Naive thymus-derived CD4-positive, alpha-beta T cell (primary cell): ENCODE measurements at regions of chr15 and their contacts with region 1.

Region 1: GRCh38 chr15:41774062-41774881 is at the start of gene MAPKBP1:
- DNase-seq: peak; percentile 96 to 99 (median 98)
- ATAC-seq: peak; percentile 97
- H3K4me3 ChIP-seq: peak within 1 kb of the TSS; percentile 93
- H3K4me3 Mint-ChIP-seq: peak within 1 kb of the TSS; percentile 86 to 97 (median 95)
- H3K27ac ChIP-seq: peak within 1 kb of the TSS; percentile 73
- H3K27ac Mint-ChIP-seq: peak within 1 kb of the TSS; percentile 88 to 97 (median 94)
- H3K4me1 ChIP-seq: peaks cover 36% of the 10 kb centered on the region in 2 donors
- H3K4me1 Mint-ChIP-seq: peaks cover 33 to 65% (median 59%) of the 10 kb centered on the region in 7 donors
- H3K27me3 ChIP-seq: no peaks in the 10 kb centered on the region
- H3K27me3 Mint-ChIP-seq: no peaks in the 10 kb centered on the region
- total RNA-seq, gene MAPKBP1: 36.5 to 44.7 (median 41.1) TPM

Region 2: GRCh38 chr15:40952901-40953712 is 821.2 kb before region 1 on chr15 and contains the start of gene CHAC1:
- CTCF ChIA-PET with region 1: no interaction called
- POLR2A ChIA-PET with region 1: no interaction called
- intact Hi-C with region 1: loop called in 1 of 2 experiments (anchors 1 kb)
- DNase-seq: peak; percentile 79 to 97 (median 94)
- ATAC-seq: peak; percentile 98
- H3K4me3 ChIP-seq: peak within 1 kb of the TSS; percentile 68
- H3K4me3 Mint-ChIP-seq: peak within 1 kb of the TSS; percentile 87 to 96 (median 94)
- H3K27ac ChIP-seq: peak within 1 kb of the TSS; percentile 74
- H3K27ac Mint-ChIP-seq: peak within 1 kb of the TSS in 8 of 9 donors; percentile 76 to 95 (median 88)
- H3K4me1 ChIP-seq: peaks cover 10 to 14% of the 10 kb centered on the region in 2 donors
- H3K4me1 Mint-ChIP-seq: peaks cover 7 to 34% (median 19%) of the 10 kb centered on the region in 7 donors
- H3K27me3 ChIP-seq: no peaks in the 10 kb centered on the region
- H3K27me3 Mint-ChIP-seq: peaks cover 0 to 4% (median 0%) of the 10 kb centered on the region in 5 donors
- total RNA-seq, gene CHAC1: 0.24 to 5.7 (median 1.1) TPM

Region 3: DNA sequence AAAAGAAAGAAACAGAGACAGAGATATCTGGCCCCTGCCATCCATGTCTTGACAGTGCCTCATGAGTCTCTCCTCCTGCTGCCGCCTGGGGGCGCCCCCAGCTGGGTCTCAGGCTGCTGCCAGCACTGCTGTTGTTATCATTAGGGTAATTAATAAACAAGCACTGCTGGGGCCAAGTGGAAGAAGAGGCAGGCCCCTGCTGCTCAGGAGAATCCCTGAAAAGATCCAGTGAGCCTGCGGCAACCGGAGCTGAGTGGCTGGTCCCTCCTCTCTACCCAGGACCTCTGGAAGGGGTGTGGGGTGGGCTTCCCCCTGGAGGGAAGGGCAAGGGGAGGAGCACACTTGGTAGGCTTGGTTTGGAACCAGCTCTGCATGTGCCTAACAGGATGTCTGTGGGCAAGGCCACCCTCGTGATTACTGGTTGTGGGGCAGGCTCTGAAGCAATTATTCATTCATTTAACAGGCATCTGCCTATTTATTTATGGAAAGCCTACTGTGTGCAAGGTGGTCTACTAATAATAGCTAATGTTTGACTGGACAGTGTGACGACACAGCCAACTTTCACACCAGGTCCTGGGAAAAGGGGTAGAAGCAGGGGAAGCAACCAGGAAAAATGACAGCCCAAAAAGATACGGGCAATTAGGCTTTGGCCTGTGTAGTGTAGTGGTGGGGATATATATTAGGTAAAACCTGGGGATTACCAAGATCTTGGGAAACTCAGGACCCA is 216.4 kb before region 1 on chr15:
- CTCF ChIA-PET with region 1: interaction called, 6 read pairs
- POLR2A ChIA-PET with region 1: no interaction called
- intact Hi-C with region 1: loop called in 1 of 2 experiments (anchors 1 kb)
- DNase-seq: peak; percentile 58 to 83 (median 78)
- ATAC-seq: peak; percentile 87
- H3K4me3 ChIP-seq: no peak overlapping the region
- H3K4me3 Mint-ChIP-seq: peak overlapping the region; percentile 86 to 93 (median 89)
- H3K27ac ChIP-seq: no peak overlapping the region
- H3K27ac Mint-ChIP-seq: peak overlapping the region; percentile 53 to 95 (median 79)
- H3K4me1 ChIP-seq: peaks cover 15 to 19% of the 10 kb centered on the region in 2 donors
- H3K4me1 Mint-ChIP-seq: peaks cover 14 to 24% (median 20%) of the 10 kb centered on the region in 7 donors
- H3K27me3 ChIP-seq: peaks cover 3 to 6% of the 10 kb centered on the region in 2 donors
- H3K27me3 Mint-ChIP-seq: peaks cover 0 to 49% (median 19%) of the 10 kb centered on the region in 5 donors

Region 4: DNA sequence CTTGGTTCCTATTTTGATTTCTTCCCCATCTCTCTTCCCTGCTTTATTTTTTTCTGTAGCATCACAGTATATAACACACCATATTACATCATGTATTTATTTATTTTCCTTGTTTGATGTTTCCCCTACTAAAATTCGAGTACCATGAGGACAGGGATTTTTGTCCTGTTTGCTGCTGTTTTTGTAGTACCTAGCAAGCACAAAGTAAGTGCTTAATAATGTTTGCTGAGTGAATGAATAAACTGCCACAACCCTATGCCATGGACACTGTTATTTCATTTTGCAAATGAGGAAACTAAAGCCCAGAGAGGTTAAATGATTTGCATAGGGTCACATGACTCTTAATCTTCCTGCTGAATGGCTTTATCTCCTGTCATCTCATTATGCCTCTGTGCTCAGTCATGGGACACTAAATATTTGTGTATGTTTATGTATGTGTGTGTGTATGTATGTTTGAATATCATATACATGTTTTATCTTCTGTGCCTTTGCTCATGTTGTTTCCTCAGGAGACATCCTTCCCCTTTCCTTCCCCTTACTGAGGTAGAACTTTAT is 140.1 kb before region 1 on chr15:
- CTCF ChIA-PET with region 1: no interaction called
- POLR2A ChIA-PET with region 1: no interaction called
- intact Hi-C with region 1: no loop called
- DNase-seq: no peak
- ATAC-seq: peak; percentile 67
- H3K4me3 ChIP-seq: no peak overlapping the region
- H3K4me3 Mint-ChIP-seq: no peak overlapping the region
- H3K27ac ChIP-seq: no peak overlapping the region
- H3K27ac Mint-ChIP-seq: peak overlapping the region in 1 of 9 donors; percentile 6
- H3K4me1 ChIP-seq: no peaks in the 10 kb centered on the region
- H3K4me1 Mint-ChIP-seq: peaks cover 5 to 16% (median 7%) of the 10 kb centered on the region in 7 donors
- H3K27me3 ChIP-seq: no peaks in the 10 kb centered on the region
- H3K27me3 Mint-ChIP-seq: peaks cover 0 to 2% (median 0%) of the 10 kb centered on the region in 5 donors

Region 5: GRCh38 chr15:41790756-41791546 is 16.7 kb after region 1 on chr15:
- CTCF ChIA-PET with region 1: interaction called, 10 read pairs
- POLR2A ChIA-PET with region 1: interaction called, 4 read pairs
- intact Hi-C with region 1: loop called (anchors 2 kb)
- DNase-seq: no peak
- ATAC-seq: no peak
- H3K4me3 ChIP-seq: no peak overlapping the region
- H3K4me3 Mint-ChIP-seq: peak overlapping the region; percentile 2 to 70 (median 46)
- H3K27ac ChIP-seq: no peak overlapping the region
- H3K27ac Mint-ChIP-seq: peak overlapping the region in 7 of 9 donors; percentile 1 to 90 (median 53)
- H3K4me1 ChIP-seq: peaks cover 8 to 10% of the 10 kb centered on the region in 2 donors
- H3K4me1 Mint-ChIP-seq: peaks cover 50 to 72% (median 57%) of the 10 kb centered on the region in 7 donors
- H3K27me3 ChIP-seq: no peaks in the 10 kb centered on the region
- H3K27me3 Mint-ChIP-seq: no peaks in the 10 kb centered on the region

Region 6: GRCh38 chr15:41904541-41905005 is 130.3 kb after region 1 on chr15:
- CTCF ChIA-PET with region 1: interaction called, 90 read pairs
- POLR2A ChIA-PET with region 1: interaction called, 41 read pairs
- intact Hi-C with region 1: loop called (anchors 1 kb)
- DNase-seq: peak; percentile 54 to 76 (median 64)
- ATAC-seq: peak; percentile 89
- H3K4me3 ChIP-seq: no peak overlapping the region
- H3K4me3 Mint-ChIP-seq: no peak overlapping the region
- H3K27ac ChIP-seq: no peak overlapping the region
- H3K27ac Mint-ChIP-seq: peak overlapping the region; percentile 9 to 90 (median 62)
- H3K4me1 ChIP-seq: peaks cover 0 to 9% of the 10 kb centered on the region in 2 donors
- H3K4me1 Mint-ChIP-seq: peaks cover 2 to 14% (median 6%) of the 10 kb centered on the region in 7 donors
- H3K27me3 ChIP-seq: no peaks in the 10 kb centered on the region
- H3K27me3 Mint-ChIP-seq: no peaks in the 10 kb centered on the region

Region 7: DNA sequence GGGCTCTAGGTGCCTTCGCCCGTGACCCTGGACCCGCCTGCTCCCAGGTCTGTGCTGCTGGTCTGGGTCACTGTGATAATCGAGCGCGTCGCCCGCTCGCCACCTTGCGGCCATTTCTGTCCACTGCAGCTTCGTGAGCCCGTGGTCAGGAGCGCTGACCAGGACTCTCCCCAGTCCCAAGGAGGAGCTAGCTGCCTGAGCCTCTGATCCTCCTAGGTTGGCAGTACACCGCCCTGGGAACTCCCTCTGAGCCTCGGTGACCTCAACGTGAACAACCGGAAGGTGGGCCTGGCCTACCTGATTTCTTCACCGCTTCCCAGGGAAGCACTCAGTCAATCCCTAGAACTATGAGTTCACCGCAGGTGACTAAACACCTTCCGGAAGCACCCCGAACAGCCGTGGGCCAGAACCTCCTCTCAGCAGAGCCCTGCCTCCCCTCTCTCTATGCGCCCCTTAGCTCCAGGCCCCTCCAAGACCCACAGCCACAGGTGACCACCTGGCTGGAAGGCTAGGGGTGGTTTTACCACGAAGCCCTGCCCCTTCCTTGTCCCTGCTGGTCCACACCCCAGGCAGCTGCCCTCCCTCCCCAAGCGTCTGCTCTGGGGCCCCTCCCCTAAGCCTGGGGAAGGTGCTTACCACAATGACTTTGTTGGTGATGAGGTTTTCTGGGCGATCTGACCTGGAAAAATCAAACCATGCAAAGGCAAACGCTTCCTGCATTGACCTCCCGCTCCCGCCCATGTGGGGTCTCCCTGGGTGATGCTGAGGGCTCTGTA is 310.4 kb after region 1 on chr15:
- CTCF ChIA-PET with region 1: interaction called, 3 read pairs
- POLR2A ChIA-PET with region 1: interaction called, 3 read pairs
- intact Hi-C with region 1: loop called in 1 of 2 experiments (anchors 1 kb)
- DNase-seq: peak in 7 of 9 donors; percentile 13 to 60 (median 29)
- ATAC-seq: peak; percentile 77
- H3K4me3 ChIP-seq: no peak overlapping the region
- H3K4me3 Mint-ChIP-seq: peak overlapping the region in 4 of 10 donors; percentile 23 to 39 (median 30)
- H3K27ac ChIP-seq: no peak overlapping the region
- H3K27ac Mint-ChIP-seq: peak overlapping the region in 2 of 9 donors; percentile 5 to 16
- H3K4me1 ChIP-seq: no peaks in the 10 kb centered on the region
- H3K4me1 Mint-ChIP-seq: peaks cover 5 to 9% (median 6%) of the 10 kb centered on the region in 7 donors
- H3K27me3 ChIP-seq: no peaks in the 10 kb centered on the region
- H3K27me3 Mint-ChIP-seq: peaks cover 0 to 15% (median 11%) of the 10 kb centered on the region in 5 donors